ENCODE measurements at regions of chr1 and their contacts with region 1.

Region 1: GRCh38 chr1:46340404-46341221 is at the start of gene NSUN4:
- DNase-seq: peak; percentile 78
- H3K4me3 ChIP-seq: peak within 1 kb of the TSS; percentile 78
- CTCF ChIP-seq: peak; percentile 77

Region 2: GRCh38 chr1:46247436-46248121 is 93.0 kb before region 1 on chr1 and contains the start of gene RAD54L:
- CTCF ChIA-PET with region 1: interaction called, 96 read pairs
- POLR2A ChIA-PET with region 1: no interaction called
- DNase-seq: peak; percentile 95
- H3K4me3 ChIP-seq: peak within 1 kb of the TSS; percentile 94
- CTCF ChIP-seq: no peak

Region 3: GRCh38 chr1:46303038-46303871 is 37.4 kb before region 1 on chr1 and contains the starts of genes LRRC41 and UQCRH:
- CTCF ChIA-PET with region 1: interaction called, 17 read pairs
- POLR2A ChIA-PET with region 1: interaction called, 5 read pairs
- DNase-seq: peak; percentile 89
- H3K4me3 ChIP-seq: peak within 1 kb of the TSS; percentile 78
- CTCF ChIP-seq: peak; percentile 2

Region 4: GRCh38 chr1:46352363-46352762 is 11.8 kb after region 1 on chr1:
- CTCF ChIA-PET with region 1: interaction called, 71 read pairs
- POLR2A ChIA-PET with region 1: no interaction called
- DNase-seq: no peak
- H3K4me3 ChIP-seq: no peak overlapping the region
- CTCF ChIP-seq: no peak